Spleen (tissue), 13 donors: ENCODE measurements at regions of chr1 and their contacts with region 1.

Region 1: DNA sequence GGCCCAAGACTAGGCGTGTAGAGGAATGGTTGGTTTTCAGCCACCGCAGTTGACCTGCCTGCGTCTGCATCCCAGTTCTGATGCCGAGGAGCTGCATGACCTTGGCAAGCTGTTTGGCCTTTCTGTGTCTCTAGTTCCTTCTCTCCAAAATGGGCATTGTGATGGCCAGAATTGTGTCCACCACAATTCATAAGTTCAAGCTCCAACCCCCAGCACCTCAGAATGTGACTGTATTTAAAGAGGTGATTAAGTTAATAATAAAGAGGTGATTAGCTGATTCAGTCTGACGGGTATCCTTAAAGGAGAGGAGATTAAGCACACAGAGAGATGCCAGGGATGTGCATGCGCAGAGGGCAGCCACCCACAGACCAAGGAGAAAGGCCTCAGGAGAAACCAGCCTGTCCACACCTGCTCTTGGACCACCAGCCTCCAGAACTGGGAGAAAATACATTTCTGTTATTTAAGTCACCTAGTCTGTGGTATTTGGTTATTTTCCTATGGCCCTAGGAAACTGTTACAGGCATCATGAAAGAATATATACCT is 28.5 kb downstream of the MAB21L3 start:
- DNase-seq: no peak
- H3K4me3 ChIP-seq: no peak overlapping the region
- H3K27ac ChIP-seq: no peak overlapping the region
- H3K4me1 ChIP-seq: peaks cover 0 to 10% (median 7%) of the 10 kb centered on the region in 6 donors
- H3K27me3 ChIP-seq: peaks cover 0 to 5% (median 0%) of the 10 kb centered on the region in 7 donors
- CTCF ChIP-seq: no peak
- POLR2A ChIP-seq: no peak

Region 2: GRCh38 chr1:116485071-116485735 is 345.5 kb after region 1 on chr1:
- intact Hi-C with region 1: loop called (anchors 5 kb)
- DNase-seq: peak; percentile 95
- H3K4me3 ChIP-seq: no peak overlapping the region
- H3K27ac ChIP-seq: no peak overlapping the region
- H3K4me1 ChIP-seq: peaks cover 0 to 22% (median 4%) of the 10 kb centered on the region in 6 donors
- H3K27me3 ChIP-seq: no peaks in the 10 kb centered on the region
- CTCF ChIP-seq: peak; percentile 68 to 96 (median 86)
- POLR2A ChIP-seq: no peak